AG04449 (cell line): ENCODE measurements at regions of chrX and their contacts with region 1.

Region 1: GRCh38 chrX:53481816-53482465 is 47.8 kb upstream of the HSD17B10 start:
- DNase-seq: no peak
- H3K4me3 ChIP-seq: no peak overlapping the region
- CTCF ChIP-seq: peak; percentile 62

Region 2: DNA sequence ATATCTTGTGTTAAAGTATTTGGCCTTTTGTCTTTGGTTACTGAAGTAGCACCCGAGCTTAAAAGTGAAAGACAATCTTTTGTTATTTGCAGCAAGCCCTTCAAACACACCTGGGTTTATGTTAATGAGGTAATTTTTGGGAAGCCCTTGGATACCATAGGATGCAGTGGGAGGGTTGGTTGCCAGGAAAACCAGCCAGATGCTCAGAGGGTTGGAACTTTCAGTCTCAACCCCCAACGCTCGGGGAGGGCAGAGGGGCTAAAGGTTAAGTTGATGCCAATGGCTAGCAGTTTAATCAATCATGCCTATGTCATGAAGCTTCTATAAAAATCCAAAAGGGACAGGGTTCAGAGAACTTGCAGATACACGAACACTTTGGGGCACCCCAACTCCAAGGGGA is 450.6 kb before region 1 on chrX:
- CTCF ChIA-PET with region 1: no interaction called
- POLR2A ChIA-PET with region 1: no interaction called
- DNase-seq: no peak
- H3K4me3 ChIP-seq: no peak overlapping the region
- CTCF ChIP-seq: no peak

Region 3: DNA sequence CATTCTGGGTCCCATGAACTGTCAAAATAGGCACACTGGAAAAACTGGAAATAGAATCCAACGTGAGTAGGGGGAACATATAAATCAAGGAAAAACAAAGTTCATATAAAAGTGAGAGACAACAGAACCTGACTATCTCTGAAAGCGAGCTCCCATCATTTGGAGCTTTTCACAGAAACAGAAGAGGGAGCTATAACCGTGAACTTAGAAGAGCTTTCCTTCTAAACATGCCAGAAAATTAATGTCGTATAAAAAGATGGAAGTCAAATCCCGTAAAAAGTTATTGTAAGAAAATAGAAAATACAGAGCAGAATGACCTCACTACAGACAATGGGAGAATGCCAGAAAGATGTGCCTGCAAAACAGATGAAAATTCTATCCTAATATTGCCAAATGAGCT is 23.9 kb before region 1 on chrX:
- CTCF ChIA-PET with region 1: interaction called, 43 read pairs
- POLR2A ChIA-PET with region 1: no interaction called
- DNase-seq: no peak
- H3K4me3 ChIP-seq: no peak overlapping the region
- CTCF ChIP-seq: no peak

Region 4: DNA sequence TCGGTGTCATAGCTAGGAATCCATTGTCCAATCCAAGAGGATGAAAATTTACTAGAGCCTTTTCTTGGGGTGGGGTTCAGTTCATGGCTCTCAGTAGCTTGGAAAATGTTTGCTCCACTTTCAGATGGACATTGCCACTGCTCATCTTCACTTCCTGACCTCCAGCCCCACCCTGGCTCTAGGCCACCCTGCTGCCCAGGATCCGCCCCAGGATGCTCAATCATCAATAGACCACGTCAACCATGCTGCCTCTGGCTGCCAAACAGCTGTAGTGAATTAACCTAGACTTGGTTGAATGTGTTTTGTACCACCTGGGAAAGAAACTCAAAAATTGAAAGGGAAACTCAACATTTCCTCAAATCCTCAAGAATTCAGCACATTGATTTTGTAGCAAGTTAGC is 10.6 kb before region 1 on chrX:
- CTCF ChIA-PET with region 1: interaction called, 12 read pairs
- POLR2A ChIA-PET with region 1: no interaction called
- DNase-seq: no peak
- H3K4me3 ChIP-seq: no peak overlapping the region
- CTCF ChIP-seq: no peak

Region 5: DNA sequence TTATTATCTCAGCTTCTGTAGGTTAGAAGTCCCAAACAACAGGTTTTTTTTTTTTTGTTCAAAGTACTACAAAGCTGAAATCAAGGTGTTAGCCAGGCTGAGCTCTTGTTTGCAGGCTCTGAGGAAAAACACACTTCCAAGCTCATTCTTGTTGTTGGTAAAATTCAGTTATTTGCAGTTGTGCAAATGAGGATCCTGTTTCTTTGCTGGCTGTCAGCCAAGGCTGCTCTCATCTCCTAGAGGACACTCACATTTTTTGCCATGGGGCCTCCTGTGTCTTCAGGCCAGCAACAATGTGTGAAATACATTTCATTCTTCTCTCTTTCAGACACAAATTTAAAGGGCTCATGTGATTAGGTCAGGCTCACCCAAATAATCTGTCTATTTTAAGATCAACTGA is 12.5 kb after region 1 on chrX:
- CTCF ChIA-PET with region 1: interaction called, 24 read pairs
- POLR2A ChIA-PET with region 1: no interaction called
- DNase-seq: no peak
- H3K4me3 ChIP-seq: no peak overlapping the region
- CTCF ChIP-seq: no peak